GM13976 (cell line): ENCODE measurements at regions of chr11 and their contacts with region 1.

Region 1: DNA sequence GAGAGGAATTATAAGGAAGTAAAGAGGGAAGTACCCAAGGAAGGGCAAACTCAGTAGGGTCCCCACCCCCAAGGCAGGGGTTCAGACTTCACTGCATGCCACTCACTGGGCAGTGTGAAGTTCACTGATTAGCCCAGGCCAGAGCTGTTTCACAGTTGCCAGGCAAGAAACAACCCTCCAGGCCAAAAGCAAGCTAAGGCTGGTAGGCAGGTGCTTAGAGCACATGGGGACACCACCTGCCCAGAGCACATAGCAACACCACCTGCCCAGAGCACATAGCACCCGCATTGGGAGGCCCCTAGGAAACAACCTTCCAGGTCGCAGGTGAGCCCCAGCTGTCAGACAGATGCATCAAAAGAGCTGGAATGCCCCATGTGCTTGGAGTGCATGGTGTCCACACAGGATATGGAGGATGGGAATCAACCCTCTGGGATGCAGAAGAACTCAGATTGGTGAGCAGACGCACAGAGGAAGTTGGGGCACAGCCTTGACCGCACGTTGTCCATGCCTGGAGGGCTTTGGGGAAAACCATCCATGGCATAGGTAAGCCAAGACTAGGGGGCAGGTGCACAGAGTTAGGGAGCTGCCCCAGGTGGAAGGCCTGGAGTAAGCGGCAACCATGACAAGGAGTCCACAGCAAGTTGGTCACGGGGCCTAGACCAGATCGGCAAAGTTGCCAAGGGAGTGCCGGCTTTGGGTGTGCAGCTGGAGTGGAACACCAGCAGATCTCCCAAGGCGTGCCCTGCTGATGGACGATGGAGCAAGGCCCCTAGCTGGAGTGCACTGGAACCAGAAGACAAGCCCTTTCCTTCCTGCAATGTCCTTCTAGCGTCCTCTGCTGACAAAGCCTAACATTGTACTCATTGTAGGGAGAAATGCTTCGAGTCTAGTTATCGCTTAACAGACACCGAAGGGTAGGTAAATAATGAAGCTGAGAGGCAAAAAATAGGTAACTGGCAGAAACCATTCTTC is 7.8 kb upstream of the TMEM216 start:
- DNase-seq: no peak
- CTCF ChIP-seq: peak; percentile 15

Region 2: DNA sequence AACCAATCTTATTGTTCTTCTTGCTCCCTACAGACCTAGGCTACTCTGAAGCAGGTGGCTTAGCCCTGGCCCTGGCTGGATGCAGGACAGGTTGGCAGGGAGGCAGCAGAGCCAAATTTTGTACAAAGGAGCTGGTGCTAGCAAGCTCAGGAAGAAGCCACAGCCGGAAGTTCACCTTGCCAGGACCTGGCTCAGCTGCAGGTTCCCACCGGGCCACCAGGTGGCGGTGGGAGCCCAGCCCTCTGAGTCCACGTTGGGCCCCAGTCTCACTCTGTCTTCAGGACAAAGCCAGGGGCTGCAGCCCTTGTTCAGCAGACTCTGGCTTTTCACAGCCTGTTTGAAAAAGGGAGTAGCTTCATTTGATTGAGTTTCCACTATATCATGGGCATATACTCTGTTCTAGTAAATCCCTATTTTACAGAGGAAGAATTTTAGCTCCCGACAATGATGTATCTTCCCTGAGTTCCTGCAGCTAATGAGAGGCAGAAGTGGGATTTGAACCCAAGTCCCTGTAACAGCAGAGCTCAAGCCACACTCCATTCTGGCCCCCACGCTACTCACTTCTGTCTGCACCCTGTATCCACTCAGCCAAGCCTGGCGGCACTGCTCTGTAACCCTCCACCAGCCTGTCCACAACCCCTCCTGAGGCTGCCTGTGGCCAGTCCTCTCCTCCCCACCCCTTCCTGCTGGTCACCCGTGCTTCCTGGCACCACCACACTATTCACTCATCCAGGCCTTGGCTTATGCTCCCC is 48.2 kb before region 1 on chr11:
- in situ Hi-C with region 1: loop called (anchors 5 kb)
- DNase-seq: peak; percentile 93
- CTCF ChIP-seq: peak; percentile 97

Region 3: DNA sequence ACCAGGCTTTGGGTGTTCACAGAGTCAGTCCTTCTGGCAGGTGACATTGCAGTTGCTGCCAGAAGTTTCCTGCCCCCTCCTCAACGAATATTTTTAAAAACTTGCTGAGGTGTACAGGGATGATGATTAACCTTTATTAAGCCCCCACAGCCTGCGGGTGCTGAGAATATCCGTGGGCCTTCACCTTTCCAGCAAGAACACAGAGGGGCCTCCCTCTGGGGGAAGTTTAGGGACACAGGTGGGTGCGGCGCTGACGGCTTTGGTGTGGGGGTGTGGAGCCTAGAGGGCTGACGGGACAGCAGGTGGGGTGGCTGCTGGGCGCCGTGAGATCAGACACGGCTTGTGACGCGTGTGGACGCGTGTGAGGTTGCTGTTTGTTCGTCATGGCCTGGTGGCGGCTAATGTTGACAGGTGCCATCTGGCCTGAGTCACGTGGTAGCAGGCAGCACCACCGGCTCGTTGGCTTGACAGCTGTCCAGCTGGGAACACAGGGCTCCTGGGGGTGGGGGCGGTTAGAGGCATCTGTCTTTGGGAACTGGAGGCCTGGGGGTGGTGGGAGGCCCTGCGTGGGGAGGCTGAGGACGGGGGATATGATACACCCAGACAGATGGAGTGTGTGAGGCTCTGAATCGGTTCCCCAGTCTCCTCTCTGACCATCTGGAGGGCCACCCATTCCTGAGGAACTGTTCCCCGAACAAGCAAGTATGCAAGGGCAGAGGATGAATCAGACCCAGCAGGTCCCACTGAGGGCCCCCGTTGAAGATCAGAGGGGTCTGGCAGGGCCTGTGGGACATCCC is 111.4 kb after region 1 on chr11:
- in situ Hi-C with region 1: no loop called
- DNase-seq: no peak
- CTCF ChIP-seq: no peak